SK-N-SH (cell line): ENCODE measurements at regions of chr6 and their contacts with region 1.

Region 1: DNA sequence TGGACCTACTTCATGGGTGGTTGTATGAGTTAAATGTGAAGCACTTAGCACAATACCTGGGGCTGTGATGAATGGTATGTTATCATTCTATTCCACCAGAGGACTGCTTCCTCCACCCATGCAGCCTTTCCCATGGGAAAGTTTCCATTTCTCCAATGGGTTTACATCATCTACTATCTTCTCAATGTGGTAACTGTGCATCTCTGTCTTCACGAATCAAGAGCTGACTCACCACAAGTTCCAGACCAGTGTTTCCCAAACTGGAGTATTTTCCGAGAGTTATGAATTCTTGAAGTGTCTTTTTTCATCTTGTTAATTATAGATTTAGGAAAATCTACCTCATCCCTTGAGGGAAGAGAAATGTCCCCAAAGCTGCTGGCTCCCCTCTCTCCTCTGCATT is 182.8 kb downstream of the UNC5CL start:
- DNase-seq: no peak
- H3K4me3 ChIP-seq: no peak overlapping the region
- H3K27ac ChIP-seq: no peak overlapping the region
- H3K4me1 ChIP-seq: peaks cover 0 to 12% of the 10 kb centered on the region in 2 experiments; a peak in 1 of 4 replicates
- H3K27me3 ChIP-seq: no peaks in the 10 kb centered on the region
- CTCF ChIP-seq: no peak
- EP300 ChIP-seq: no peak
- RAD21 ChIP-seq: no peak

Region 2: GRCh38 chr6:40197371-40197770 is 658.9 kb before region 1 on chr6:
- CTCF ChIA-PET with region 1: no interaction called
- POLR2A ChIA-PET with region 1: no interaction called
- DNase-seq: no peak
- H3K4me3 ChIP-seq: no peak overlapping the region
- H3K27ac ChIP-seq: no peak overlapping the region
- H3K4me1 ChIP-seq: no peaks in the 10 kb centered on the region
- H3K27me3 ChIP-seq: no peaks in the 10 kb centered on the region
- CTCF ChIP-seq: no peak
- EP300 ChIP-seq: no peak
- RAD21 ChIP-seq: no peak

Region 3: DNA sequence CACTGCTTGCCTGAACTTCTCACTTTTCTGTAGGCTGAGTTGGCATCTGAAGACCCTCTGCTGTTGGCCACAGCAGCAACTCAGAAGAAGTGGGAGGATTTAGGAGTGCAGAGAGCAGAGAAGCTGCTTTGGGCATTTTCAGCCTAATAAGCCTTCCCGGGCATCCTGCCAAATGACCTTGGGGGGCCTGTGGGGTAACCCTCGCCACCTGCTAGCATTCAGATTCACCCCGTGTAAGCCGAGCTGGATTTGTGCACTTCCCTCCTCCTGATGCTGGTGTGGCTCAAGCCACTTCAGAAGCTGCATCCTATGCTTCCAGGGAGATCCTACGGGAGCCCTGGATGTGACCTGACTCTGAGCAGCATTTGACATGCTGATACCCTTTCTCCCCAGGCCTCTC is 383.9 kb before region 1 on chr6:
- CTCF ChIA-PET with region 1: no interaction called
- POLR2A ChIA-PET with region 1: no interaction called
- DNase-seq: no peak
- H3K4me3 ChIP-seq: no peak overlapping the region
- H3K27ac ChIP-seq: no peak overlapping the region; a peak in 1 of 4 replicates
- H3K4me1 ChIP-seq: peaks cover 0 to 16% of the 10 kb centered on the region in 2 experiments; a peak in 2 of 4 replicates
- H3K27me3 ChIP-seq: no peaks in the 10 kb centered on the region
- CTCF ChIP-seq: no peak
- EP300 ChIP-seq: no peak
- RAD21 ChIP-seq: no peak

Region 4: GRCh38 chr6:40845553-40845952 is 10.7 kb before region 1 on chr6:
- CTCF ChIA-PET with region 1: interaction called, 10 read pairs
- POLR2A ChIA-PET with region 1: no interaction called
- DNase-seq: no peak
- H3K4me3 ChIP-seq: no peak overlapping the region
- H3K27ac ChIP-seq: no peak overlapping the region
- H3K4me1 ChIP-seq: peaks cover 6% of the 10 kb centered on the region in 2 experiments; a peak in 2 of 4 replicates
- H3K27me3 ChIP-seq: no peaks in the 10 kb centered on the region
- CTCF ChIP-seq: peak; percentile 62
- EP300 ChIP-seq: no peak
- RAD21 ChIP-seq: peak; percentile 64

Region 5: GRCh38 chr6:40999569-40999968 is 143.3 kb after region 1 on chr6:
- CTCF ChIA-PET with region 1: no interaction called
- POLR2A ChIA-PET with region 1: no interaction called
- DNase-seq: peak; percentile 36
- H3K4me3 ChIP-seq: no peak overlapping the region
- H3K27ac ChIP-seq: no peak overlapping the region
- H3K4me1 ChIP-seq: peaks cover 7 to 13% of the 10 kb centered on the region in 2 experiments; a peak in 3 of 4 replicates
- H3K27me3 ChIP-seq: no peaks in the 10 kb centered on the region; the same call in 1 of the 2 replicates
- CTCF ChIP-seq: peak; percentile 43
- EP300 ChIP-seq: no peak
- RAD21 ChIP-seq: no peak